Sciatic nerve (tissue), 2 donors: ENCODE measurements at regions of chr10 and their contacts with region 1.

Region 1: GRCh38 chr10:3776796-3777571 is 8.0 kb downstream of the KLF6 start:
- DNase-seq: no peak
- ATAC-seq: no peak

Region 2: DNA sequence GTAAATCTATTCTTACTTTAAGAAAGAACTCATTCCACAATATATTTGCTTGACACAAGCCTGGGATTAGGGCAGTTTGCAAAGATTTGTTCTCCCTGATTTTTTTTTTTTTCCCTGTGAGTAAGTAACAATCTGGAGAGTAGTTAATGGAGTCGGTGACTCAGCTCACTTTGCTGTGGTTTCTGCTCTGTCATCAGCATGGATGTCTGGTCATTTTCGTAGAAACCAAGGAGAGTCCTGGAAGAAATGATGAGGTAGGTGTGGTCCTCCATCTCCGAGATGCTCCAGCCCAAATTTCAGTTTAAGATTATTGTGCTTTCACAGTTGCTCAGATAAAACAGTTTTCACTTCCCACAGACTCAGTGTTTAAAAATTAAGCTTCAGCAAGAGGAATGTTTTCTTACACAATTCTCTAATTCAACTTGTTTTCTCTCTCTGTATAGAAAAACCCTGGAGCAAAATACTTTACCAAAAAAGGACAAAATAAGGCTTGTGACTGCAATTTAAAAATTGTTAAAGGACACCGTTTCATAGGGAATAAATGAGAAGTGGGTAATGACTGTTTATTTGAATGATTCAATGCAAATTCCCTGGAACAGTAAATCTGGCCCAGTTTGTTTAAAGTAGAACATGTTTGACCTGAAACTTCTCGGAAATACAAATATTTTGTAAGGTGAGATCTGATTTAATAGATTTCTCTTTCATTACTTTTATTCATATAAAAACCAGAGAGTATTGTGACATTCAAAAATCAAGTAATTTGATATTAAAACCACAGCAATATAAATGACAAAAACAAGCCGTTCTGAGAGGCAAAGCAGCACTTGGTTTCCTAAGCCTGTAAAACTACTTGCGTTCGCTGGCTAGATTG is 527.9 kb before region 1 on chr10:
- intact Hi-C with region 1: loop called (anchors 10 kb)
- DNase-seq: no peak
- ATAC-seq: peak; percentile 97